ENCODE measurements at regions of chr5 and their contacts with region 1.

Region 1: GRCh38 chr5:170348137-170348633 is 41.0 kb downstream of the KCNMB1 start:
- DNase-seq: no peak
- ATAC-seq: no peak
- H3K4me3 ChIP-seq: no peak overlapping the region
- H3K27ac ChIP-seq: no peak overlapping the region
- H3K4me1 ChIP-seq: peaks cover 3% of the 10 kb centered on the region
- H3K27me3 ChIP-seq: no peaks in the 10 kb centered on the region
- CTCF ChIP-seq: peak; percentile 22

Region 2: DNA sequence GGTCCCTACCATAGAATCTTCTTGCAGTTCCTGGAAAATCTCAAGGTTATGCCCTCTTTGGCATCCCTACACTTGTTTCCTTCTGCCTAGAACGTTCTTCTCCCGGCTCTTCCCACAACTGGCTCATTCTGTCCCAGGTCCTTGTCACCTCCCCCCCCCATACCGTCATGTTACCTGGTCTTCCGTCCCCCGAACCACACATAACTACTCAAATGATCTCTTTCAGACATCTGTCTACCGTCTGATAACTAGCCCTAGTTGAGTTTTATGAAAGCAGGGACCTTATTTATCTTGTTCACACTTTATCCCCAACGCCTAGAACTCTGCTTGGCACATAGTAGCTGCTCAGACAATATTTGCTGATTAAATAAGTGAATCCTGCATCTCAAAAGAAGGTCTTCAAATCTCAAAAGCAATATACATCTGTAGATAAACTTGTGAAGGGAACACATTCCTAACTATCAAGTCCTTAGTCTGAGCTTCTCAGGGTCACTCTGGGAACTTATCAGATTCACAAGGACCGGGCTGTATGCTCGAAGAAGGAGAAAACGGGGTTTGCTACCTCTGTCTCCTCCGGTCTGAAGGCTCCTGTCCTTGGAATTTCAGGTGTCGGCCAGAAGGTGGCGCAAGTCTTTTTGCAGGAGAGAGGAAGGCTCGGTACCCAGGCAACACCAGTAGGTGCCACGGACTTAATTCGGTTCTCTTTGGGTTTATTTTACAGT is 80.6 kb before region 1 on chr5:
- intact Hi-C with region 1: loop called (anchors 10 kb)
- DNase-seq: peak; percentile 80
- ATAC-seq: peak; percentile 80
- H3K4me3 ChIP-seq: peak overlapping the region; percentile 9
- H3K27ac ChIP-seq: peak overlapping the region; percentile 58
- H3K4me1 ChIP-seq: peaks cover 27% of the 10 kb centered on the region
- H3K27me3 ChIP-seq: no peaks in the 10 kb centered on the region
- CTCF ChIP-seq: peak; percentile 86

Region 3: DNA sequence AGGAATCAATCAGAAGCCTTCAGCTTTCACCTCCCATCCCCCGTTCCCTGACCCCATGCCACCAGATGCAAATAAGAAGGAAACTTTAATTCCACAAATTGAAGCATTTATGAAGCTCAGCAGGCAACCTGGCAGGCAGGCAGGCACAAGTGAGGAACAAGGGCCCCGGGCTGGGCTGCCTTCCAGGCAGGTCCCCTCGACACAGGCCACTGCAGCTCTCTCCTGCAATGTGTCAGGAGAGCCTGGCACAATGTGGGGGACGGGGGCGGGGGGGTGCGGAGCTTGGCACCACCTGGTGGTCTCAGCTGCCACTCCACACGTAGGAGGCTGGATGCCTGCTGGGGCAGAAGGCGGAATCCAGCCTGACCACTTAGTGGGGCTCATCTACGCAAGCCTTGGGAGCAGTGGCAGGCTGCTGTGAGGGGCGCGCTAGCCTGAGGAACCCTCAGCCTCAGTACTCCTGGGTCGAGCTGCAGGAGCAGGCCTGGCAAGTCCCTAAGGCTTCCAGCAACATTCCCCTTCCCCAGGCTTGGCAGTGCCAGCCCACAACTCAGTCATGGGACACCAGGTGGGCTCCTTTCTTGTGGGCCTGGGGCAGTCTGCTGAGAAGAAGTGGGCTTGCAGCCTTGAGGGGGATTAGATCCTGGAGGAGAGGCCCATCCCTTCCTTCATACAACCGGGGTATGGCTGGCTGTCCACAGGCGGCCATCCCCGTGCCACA is 91.2 kb after region 1 on chr5:
- intact Hi-C with region 1: no loop called
- DNase-seq: no peak
- ATAC-seq: no peak
- H3K4me3 ChIP-seq: no peak overlapping the region
- H3K27ac ChIP-seq: no peak overlapping the region
- H3K4me1 ChIP-seq: no peaks in the 10 kb centered on the region
- H3K27me3 ChIP-seq: no peaks in the 10 kb centered on the region
- CTCF ChIP-seq: no peak

Measured in upper lobe of right lung (tissue), 1 donor.